PC-3 (cell line): ENCODE measurements at regions of chr4 and their contacts with region 1.

Region 1: GRCh38 chr4:103786014-103786413 is 66.2 kb upstream of the TACR3 start:
- DNase-seq: peak; percentile 63
- ATAC-seq: peak; percentile 57
- H3K4me3 ChIP-seq: no peak overlapping the region
- H3K27ac ChIP-seq: no peak overlapping the region
- H3K4me1 ChIP-seq: no peaks in the 10 kb centered on the region
- H3K27me3 ChIP-seq: no peaks in the 10 kb centered on the region
- CTCF ChIP-seq: peak; percentile 71

Region 2: GRCh38 chr4:103478729-103479128 is 307.3 kb before region 1 on chr4:
- CTCF ChIA-PET with region 1: no interaction called
- POLR2A ChIA-PET with region 1: no interaction called
- intact Hi-C with region 1: loop called (anchors 10 kb)
- DNase-seq: peak; percentile 12
- ATAC-seq: no peak
- H3K4me3 ChIP-seq: no peak overlapping the region
- H3K27ac ChIP-seq: no peak overlapping the region
- H3K4me1 ChIP-seq: no peaks in the 10 kb centered on the region
- H3K27me3 ChIP-seq: no peaks in the 10 kb centered on the region
- CTCF ChIP-seq: peak; percentile 24; the same call in 1 of the 2 replicates

Region 3: GRCh38 chr4:103634236-103634635 is 151.8 kb before region 1 on chr4:
- CTCF ChIA-PET with region 1: no interaction called
- POLR2A ChIA-PET with region 1: no interaction called
- intact Hi-C with region 1: loop called (anchors 2 kb)
- DNase-seq: peak; percentile 7
- ATAC-seq: no peak
- H3K4me3 ChIP-seq: no peak overlapping the region
- H3K27ac ChIP-seq: no peak overlapping the region
- H3K4me1 ChIP-seq: no peaks in the 10 kb centered on the region
- H3K27me3 ChIP-seq: no peaks in the 10 kb centered on the region
- CTCF ChIP-seq: peak; percentile 30; the same call in 1 of the 2 replicates

Region 4: DNA sequence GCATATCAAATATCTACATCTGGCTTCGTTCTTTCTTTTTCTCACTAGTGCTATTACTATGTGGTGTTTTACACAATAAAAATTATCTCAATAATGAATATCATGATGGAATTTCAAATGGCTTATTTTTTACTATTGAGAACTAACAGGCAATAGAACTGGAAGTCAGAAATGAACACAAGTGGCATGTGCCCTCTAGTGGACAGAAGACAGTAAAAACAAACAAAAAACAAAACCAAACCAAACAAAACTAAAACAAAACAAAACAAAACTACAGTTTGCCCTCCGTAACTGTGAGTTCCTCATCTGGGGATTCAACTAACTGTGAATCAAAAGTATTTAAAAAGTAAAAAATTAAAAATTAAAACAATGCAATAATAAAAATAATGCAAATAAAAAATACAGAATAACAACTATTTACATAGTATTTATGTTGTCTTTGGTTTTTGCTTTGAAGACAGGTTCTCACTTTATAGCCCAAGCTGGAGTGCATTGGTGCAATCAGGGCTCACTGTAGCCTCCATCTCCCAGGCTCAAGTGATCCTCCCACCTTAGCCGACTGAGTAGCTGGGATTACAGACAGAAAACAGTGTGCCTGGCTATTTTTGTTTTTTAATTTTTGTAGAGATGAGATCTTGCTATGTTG is 129.3 kb after region 1 on chr4:
- CTCF ChIA-PET with region 1: no interaction called
- POLR2A ChIA-PET with region 1: no interaction called
- intact Hi-C with region 1: loop called (anchors 10 kb)
- DNase-seq: peak; percentile 25
- ATAC-seq: no peak
- H3K4me3 ChIP-seq: no peak overlapping the region
- H3K27ac ChIP-seq: no peak overlapping the region
- H3K4me1 ChIP-seq: no peaks in the 10 kb centered on the region
- H3K27me3 ChIP-seq: no peaks in the 10 kb centered on the region
- CTCF ChIP-seq: peak; percentile 65

Region 5: GRCh38 chr4:103996637-103997036 is 210.6 kb after region 1 on chr4:
- CTCF ChIA-PET with region 1: no interaction called
- POLR2A ChIA-PET with region 1: no interaction called
- intact Hi-C with region 1: no loop called
- DNase-seq: peak; percentile 72
- ATAC-seq: peak; percentile 99
- H3K4me3 ChIP-seq: no peak overlapping the region
- H3K27ac ChIP-seq: peak overlapping the region; percentile 14; the same call in 1 of the 2 replicates
- H3K4me1 ChIP-seq: peaks cover 12% of the 10 kb centered on the region; the same call in 1 of the 2 replicates
- H3K27me3 ChIP-seq: no peaks in the 10 kb centered on the region
- CTCF ChIP-seq: no peak